ENCODE measurements at regions of chrX and their contacts with region 1.

Region 1: DNA sequence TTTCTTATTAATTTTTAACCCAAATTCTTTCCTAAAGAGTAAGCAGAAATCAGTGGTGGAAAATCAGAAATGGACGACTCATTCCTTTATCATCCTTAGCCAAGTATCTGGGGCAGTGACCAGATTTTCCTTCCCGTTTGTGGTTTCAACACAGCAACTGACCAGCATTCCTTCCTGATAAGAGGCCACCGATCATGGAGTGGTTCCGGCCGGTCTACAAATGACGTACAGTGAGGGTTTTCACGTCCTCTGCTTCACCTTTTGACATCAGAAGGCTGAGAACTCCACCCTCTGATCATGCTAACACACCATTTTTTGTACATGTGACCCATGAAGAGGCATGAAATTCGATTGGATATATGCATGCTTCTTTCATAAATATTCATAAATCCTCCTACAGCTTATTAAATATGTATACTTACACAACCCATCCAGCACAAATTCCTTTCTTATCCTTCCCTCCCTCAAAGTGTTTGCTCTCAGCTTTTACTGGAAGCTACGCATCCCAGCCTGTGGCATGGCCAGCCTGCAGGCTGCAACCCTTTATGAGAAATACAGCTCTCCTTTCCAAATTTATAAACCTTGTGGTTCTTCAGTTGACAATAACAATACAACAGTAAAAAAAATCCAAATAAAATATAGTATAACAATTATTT is 173.0 kb upstream of the CASK start:
- DNase-seq: peak in 1 of 2 donors; percentile 62
- ATAC-seq: no peak
- H3K4me3 ChIP-seq: no peak overlapping the region
- H3K27ac ChIP-seq: no peak overlapping the region
- H3K4me1 ChIP-seq: no peaks in the 10 kb centered on the region
- H3K27me3 ChIP-seq: no peaks in the 10 kb centered on the region

Region 2: GRCh38 chrX:41923257-41923969 is 173.0 kb before region 1 on chrX and contains the start of gene CASK:
- intact Hi-C with region 1: loop called in 1 of 2 experiments (anchors 10 kb)
- DNase-seq: peak; percentile 95 to 97
- ATAC-seq: peak; percentile 96
- H3K4me3 ChIP-seq: peak within 1 kb of the TSS; percentile 36 to 94
- H3K27ac ChIP-seq: peak within 1 kb of the TSS in 1 of 2 donors; percentile 91
- H3K4me1 ChIP-seq: peaks cover 0 to 3% of the 10 kb centered on the region in 2 donors
- H3K27me3 ChIP-seq: no peaks in the 10 kb centered on the region
- total RNA-seq, gene CASK: 41.1 to 51.1 TPM

Measured in aorta (tissue), 5 donors.